ENCODE measurements at regions of chr10 and their contacts with region 1.

Region 1: GRCh38 chr10:86836044-86836443 is 79.6 kb downstream of the BMPR1A start:
- DNase-seq: no peak
- H3K4me3 ChIP-seq: no peak overlapping the region
- H3K27ac ChIP-seq: no peak overlapping the region
- H3K4me1 ChIP-seq: no peaks in the 10 kb centered on the region
- H3K27me3 ChIP-seq: no peaks in the 10 kb centered on the region
- CTCF ChIP-seq: no peak

Region 2: GRCh38 chr10:86698207-86698940 is 137.7 kb before region 1 on chr10:
- CTCF ChIA-PET with region 1: no interaction called
- POLR2A ChIA-PET with region 1: no interaction called
- intact Hi-C with region 1: no loop called
- DNase-seq: no peak
- H3K4me3 ChIP-seq: no peak overlapping the region
- H3K27ac ChIP-seq: no peak overlapping the region
- H3K4me1 ChIP-seq: no peaks in the 10 kb centered on the region
- H3K27me3 ChIP-seq: no peaks in the 10 kb centered on the region
- CTCF ChIP-seq: no peak

Region 3: DNA sequence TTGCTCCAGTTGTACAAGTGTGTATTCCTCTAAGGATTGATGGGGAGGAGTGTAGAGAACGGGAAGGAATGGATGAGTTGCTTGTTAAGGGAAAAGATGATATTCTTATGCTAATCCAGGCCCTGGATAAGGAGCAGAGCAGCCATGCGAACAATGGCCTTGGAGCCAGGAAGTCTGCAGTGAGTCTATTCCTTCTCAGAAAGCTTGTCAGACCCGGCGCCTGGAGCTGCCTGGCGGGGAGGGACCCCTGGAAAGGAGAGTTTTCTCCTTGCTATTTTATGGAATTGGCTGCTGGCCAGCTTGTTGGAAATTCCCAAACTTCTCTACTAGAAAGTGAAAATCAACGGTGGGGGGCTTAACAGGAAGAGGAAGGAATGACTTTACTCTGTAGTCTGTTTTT is 32.3 kb after region 1 on chr10:
- CTCF ChIA-PET with region 1: no interaction called
- POLR2A ChIA-PET with region 1: interaction called, 14 read pairs
- intact Hi-C with region 1: no loop called
- DNase-seq: no peak
- H3K4me3 ChIP-seq: no peak overlapping the region
- H3K27ac ChIP-seq: no peak overlapping the region
- H3K4me1 ChIP-seq: no peaks in the 10 kb centered on the region
- H3K27me3 ChIP-seq: no peaks in the 10 kb centered on the region
- CTCF ChIP-seq: no peak

Region 4: DNA sequence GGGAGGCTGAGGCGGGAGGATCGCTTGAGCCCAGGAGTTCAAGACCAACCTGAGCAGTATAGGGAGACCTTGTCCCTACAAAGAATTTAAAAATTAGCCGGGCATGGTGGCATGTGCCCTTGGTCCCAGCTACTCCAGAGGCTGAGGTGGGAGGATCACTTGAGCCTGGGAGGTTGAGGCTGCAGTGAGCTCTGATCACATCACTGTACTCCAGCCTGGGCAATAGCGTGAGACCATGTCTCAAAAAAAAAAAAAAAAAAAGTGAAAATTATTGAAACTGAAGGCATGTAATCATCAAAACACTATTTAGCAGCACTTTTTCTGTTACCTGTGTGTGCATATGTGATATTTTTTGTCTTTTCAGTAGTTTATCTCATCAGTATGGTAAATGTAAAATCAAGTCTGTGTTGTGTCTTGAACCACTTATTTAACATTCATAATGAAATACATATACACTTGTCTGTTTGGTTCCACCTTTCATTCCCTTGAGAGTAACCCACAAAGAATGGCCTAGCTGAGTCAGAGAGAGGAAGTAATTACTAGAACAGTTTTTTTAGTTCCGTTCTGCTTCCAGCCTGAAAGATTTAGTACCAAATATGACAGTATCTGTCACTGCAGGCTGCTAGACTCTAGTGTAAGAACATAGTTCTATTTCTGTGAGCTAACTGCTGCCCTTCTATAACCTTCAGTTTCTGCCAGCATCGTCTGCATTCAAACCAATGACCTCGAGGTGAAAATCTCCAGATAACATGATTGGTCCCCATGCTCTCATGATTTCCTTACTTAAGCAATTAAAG is 52.7 kb after region 1 on chr10:
- CTCF ChIA-PET with region 1: no interaction called
- POLR2A ChIA-PET with region 1: no interaction called
- intact Hi-C with region 1: no loop called
- DNase-seq: no peak
- H3K4me3 ChIP-seq: no peak overlapping the region
- H3K27ac ChIP-seq: no peak overlapping the region
- H3K4me1 ChIP-seq: no peaks in the 10 kb centered on the region
- H3K27me3 ChIP-seq: no peaks in the 10 kb centered on the region
- CTCF ChIP-seq: no peak